BJ (cell line): ENCODE measurements at regions of chr20 and their contacts with region 1.

Region 1: DNA sequence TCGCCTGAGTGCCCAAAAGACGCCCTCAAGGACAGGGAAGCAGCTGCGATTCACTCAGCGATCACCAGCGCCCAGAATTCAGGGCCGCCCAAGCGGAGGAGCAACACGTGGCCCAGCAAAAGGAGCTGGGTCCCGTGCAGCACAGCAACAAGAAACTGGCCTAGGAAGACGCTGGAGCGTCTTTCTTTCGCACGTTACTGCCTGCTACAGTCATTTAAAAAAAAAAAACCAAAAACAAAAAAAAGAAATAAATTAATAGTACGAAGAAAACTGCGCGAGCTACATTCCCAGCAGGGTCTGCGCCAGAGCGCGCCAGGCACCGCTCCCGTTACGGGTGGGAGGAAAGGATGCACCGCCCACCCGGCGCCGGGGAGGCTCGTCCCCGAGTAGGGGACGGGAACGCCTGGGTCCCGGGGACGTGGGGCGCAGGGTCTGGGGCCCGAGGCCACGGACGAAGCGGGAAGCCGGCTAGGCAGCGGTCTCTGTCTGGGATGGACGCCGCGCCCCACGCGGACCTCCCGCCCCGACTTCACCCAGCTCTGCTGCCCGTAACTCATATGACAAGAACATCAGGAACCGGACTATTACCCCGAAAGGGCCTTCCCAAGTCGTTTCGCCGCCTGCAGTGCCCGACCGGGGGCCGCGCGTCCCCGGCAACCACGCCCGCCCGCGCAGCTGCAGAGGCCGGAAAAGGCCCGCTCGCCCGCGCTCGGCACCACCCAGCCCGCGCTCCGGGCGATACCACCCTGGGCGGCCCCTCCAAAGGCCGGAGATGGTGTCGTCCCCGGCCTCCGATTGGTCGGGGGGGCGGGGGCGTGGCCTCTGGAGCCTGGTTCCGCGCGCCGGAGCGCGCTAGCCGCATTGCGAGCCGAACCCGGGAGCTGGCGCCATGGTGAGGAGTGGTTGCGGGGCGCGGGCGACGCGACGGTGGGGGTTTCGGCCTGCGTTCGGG is at the start of gene NOP56:
- DNase-seq: no peak
- H3K4me3 ChIP-seq: peak within 1 kb of the TSS; percentile 87
- H3K27me3 ChIP-seq: no peaks in the 10 kb centered on the region
- CTCF ChIP-seq: no peak
- polyA plus RNA-seq, gene NOP56: 131 and 136 TPM in 2 replicates

Region 2: GRCh38 chr20:2523919-2524708 is 127.9 kb before region 1 on chr20:
- CTCF ChIA-PET with region 1: interaction called, 23 read pairs
- POLR2A ChIA-PET with region 1: no interaction called
- DNase-seq: no peak
- H3K4me3 ChIP-seq: peak overlapping the region; percentile 68
- H3K27me3 ChIP-seq: peaks cover 1% of the 10 kb centered on the region; the same call in 1 of the 2 replicates
- CTCF ChIP-seq: peak; percentile 97

Region 3: DNA sequence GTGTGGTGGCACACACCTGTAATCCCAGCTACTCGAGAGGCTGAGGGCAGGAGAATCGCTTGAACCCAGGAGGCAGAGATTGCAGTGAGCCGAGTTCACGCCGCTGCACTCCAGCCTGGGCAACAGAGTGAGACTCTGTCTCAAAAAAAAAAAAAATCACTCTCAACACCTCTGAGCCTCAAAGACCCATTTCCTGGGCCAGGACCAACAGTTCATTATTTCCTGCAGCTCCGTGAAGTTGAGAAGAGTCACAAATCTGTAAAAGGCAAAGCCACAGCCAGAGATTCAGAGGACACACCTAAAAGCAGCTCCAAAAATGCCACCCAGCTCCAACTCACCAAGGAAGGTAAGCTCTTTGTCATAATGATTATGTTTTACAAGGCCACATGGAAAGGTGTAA is 14.8 kb before region 1 on chr20:
- CTCF ChIA-PET with region 1: interaction called, 15 read pairs
- POLR2A ChIA-PET with region 1: no interaction called
- DNase-seq: no peak
- H3K4me3 ChIP-seq: no peak overlapping the region
- H3K27me3 ChIP-seq: peaks cover 8% of the 10 kb centered on the region
- CTCF ChIP-seq: no peak

Region 4: DNA sequence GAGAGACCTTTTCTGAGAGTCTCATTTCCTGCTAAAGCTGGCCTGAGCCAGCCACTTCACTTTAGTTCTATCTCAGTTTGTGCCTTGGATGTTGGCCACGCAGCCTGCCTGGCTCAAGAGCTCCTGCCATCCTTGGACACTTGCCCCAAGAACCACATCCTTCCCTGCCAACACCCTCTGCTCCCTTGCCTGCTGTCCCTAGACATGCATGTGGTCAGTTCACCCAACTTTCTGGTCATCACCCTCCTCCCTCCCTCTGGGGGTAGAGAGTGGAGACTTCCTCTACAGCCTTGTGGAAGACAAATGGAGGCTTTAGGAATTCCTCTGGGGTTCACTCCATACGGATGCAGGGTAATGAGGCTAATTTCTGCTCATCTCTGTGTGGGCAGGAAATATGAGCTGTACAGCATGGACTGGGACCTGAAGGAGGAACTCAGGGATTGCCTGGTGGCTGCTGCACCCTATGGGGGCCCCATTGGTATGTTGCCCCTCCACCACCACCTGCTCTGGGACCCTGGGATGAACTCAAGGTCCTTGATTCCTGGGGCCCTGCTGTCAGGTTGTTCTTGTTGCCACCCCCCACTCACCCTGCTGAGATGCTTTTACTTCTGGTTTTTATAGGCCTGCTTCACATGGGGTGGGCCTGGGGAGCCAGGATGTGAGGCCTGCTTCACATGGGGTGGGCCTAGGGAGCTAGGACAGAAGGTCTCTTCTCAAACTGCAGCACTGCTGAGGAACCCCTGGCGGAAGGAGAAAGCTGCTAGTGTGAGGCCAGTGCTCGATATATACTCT is 207.5 kb after region 1 on chr20:
- CTCF ChIA-PET with region 1: no interaction called
- POLR2A ChIA-PET with region 1: no interaction called
- DNase-seq: no peak
- H3K4me3 ChIP-seq: no peak overlapping the region
- H3K27me3 ChIP-seq: no peaks in the 10 kb centered on the region
- CTCF ChIP-seq: no peak